Dendritic cell treated with granulocyte-macrophage colony-stimulating factor and Interleukin-4, amounts not matched to agents 40 ng/mL and 50 ng/mL, for 4 days (primary cell): ENCODE measurements at regions of chr19 and their contacts with region 1.

Region 1: DNA sequence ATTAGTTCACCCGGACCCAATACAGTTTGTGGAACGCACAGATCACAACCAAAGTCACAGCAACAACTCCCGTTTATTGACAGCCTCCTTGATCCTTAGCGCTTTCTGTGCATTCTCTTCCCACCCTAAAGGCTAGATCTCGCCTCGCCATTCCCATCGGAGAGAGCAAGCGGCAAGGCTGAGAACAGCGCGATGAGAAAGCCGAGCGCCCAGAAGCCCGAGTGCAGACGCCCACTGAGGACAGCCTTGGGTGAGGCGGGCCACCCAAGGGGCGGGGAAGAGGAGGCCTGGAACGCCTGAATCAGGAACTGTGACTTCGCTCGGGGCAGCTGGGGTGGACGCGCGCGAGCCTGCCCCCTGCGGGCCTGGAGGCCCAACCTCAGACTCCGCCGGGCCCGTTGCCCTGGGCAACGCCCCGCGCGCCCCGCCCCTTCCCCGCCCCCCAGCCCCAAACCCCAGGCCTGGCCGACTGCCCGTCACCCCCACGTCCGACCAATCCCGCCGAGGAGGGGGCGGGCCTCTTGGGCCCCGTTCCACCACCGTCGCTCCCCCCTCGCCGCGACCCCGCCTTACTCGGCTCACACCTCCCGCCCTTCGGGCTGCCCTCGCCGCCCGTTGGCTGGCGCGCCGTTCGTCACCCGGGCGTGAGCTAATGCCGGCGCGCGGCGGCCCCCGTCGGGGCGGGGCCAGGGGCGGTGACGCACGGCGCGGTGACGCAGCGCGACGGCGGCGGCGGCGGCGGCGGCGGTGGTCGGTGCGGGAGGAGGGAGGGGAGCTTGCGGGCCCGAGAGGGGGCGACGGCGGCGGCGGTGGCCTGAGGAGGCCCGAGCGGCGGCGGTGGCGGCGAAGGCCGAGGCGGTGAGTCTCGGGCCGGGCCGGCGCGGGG is at the start of gene SAMD4B:
- H3K4me3 Mint-ChIP-seq: peak within 1 kb of the TSS; percentile 95
- H3K27ac Mint-ChIP-seq: peak within 1 kb of the TSS; percentile 94
- H3K4me1 Mint-ChIP-seq: peaks cover 71% of the 10 kb centered on the region
- H3K27me3 Mint-ChIP-seq: no peaks in the 10 kb centered on the region

Region 2: DNA sequence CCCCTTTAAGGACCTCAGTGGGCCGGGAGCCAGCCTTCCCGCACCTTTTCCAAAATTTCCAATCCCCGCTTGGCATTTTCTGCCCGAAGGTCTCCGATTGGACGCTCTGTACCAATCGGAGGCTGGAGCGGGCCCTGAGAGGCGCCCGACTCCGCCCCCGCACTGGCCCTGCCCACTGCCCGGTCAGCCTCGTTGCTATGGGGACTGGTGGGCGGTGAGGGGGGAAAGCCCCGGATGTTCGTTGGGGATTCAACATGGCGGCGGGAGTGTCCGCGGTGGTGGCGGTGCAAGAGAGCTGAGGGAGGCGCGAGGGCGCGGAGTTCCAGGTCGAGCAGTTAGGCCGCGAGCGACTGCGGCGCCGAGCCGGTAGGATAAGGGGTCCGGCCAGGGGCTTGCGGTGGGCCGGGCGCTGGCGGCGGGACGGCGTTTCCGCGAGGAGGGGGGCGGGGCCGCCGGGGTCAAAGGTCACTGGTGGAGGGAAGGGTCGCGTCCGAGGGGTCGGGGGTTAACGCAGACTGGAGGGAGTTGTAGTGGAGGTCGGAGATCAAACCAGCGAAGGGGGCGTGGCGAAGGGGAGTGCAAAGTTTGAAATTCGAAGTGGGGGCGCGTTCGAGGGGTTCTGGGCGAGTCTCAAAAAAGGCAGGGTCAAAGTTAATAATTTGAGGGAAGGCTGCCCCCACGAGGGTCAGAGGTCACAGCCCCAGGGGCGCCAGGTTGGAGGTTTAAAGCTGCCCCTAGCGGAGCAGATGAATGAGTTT is 216.2 kb before region 1 on chr19 and contains the start of gene PAK4:
- intact Hi-C with region 1: loop called (anchors 5 kb)
- H3K4me3 Mint-ChIP-seq: peak within 1 kb of the TSS; percentile 97
- H3K27ac Mint-ChIP-seq: peak within 1 kb of the TSS; percentile 93
- H3K4me1 Mint-ChIP-seq: peaks cover 42% of the 10 kb centered on the region
- H3K27me3 Mint-ChIP-seq: peaks cover 11% of the 10 kb centered on the region

Region 3: DNA sequence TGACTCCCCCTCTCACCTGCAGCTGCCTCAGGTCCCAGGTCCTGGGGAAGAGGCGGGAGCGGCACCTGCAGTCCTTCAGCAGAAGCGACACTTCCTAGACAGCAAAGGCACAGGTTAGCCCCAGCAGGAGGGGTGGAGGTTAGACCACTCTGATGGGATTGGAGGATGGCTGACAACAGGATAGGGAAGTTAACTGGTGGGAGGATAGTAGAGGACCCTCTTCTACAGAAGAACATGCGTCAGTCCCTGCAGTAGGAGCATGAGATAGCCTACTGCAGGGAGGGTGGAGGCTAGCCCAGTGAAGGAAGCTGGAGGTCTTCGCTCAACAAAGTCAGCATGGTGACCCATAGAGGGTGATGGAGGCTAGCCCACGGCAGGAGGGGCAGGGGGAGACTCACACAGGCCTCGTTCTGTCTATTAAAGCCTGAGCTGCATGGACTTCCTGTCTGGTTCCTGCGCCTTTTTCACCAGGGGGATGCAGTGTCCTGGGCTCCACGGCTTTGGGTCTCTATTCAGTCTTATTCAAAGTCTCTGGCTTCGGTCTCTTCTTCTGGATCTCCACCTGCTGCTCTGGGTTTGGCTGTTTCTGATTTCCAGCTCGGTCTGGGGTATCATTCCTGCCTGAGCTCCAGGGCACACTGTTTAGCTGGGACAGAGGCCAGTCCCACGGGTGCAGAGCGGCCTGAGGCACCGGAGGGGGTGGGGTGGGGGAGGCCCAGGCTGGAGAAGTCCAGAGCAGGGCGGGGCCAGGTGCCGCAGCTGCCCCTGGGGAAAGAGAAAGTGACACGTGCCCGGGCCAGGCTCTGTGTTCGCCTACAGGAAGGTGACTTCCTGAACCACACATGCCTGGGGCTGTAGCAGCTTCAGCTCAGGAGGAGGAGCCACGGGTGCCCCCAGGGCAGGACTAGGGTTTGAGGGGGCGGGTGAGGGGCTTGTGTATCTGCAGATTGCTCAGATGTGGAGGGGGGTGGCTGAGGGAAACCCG is 104.5 kb before region 1 on chr19:
- intact Hi-C with region 1: no loop called
- H3K4me3 Mint-ChIP-seq: no peak overlapping the region
- H3K27ac Mint-ChIP-seq: peak overlapping the region; percentile 28
- H3K4me1 Mint-ChIP-seq: peaks cover 8% of the 10 kb centered on the region
- H3K27me3 Mint-ChIP-seq: peaks cover 35% of the 10 kb centered on the region

Region 4: DNA sequence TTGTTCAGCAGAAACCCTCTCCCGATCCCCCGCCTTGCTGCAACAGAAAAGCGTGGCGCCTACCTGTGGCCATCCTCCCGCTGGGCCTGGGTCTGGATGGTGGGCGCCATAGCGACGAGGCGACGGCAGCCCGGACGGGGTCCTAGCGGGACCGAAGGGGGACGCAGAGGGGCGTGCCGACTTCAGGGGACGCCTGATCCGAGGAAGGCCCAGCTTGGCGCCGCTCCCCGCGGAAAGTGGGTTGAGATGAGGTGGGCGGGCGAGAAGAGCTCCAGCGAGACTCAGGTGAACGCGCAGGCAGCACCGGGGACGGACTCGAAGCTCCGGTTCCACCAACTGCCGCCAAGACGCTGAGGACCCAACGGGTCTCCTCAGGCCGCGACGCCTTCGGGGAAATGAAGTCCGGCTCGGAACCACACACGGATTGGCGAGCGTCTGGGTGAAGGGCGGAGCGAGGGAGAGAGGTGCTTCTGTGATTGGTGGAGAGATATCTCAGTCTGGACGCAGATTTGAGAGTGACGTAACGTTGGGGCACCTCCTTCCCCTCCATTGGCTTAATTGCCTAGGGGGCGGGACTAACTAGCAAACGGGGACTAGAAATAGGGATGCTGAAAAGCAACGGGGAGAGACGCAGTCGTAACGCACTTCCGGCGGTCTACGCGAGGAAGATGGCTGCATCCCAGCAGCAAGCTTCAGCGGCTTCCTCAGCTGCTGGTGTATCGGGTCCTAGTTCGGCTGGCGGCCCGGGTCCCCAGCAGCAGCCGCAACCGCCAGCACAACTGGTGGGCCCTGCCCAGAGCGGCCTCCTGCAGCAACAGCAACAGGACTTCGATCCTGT is 49.0 kb after region 1 on chr19 and contains the starts of genes MED29 and PAF1:
- intact Hi-C with region 1: loop called (anchors 2 kb)
- H3K4me3 Mint-ChIP-seq: peak within 1 kb of the TSS; percentile 99
- H3K27ac Mint-ChIP-seq: peak within 1 kb of the TSS; percentile 98
- H3K4me1 Mint-ChIP-seq: peaks cover 57% of the 10 kb centered on the region
- H3K27me3 Mint-ChIP-seq: no peaks in the 10 kb centered on the region

Region 5: GRCh38 chr19:39412100-39412866 is 70.3 kb after region 1 on chr19 and contains the start of gene PLEKHG2:
- intact Hi-C with region 1: loop called (anchors 5 kb)
- H3K4me3 Mint-ChIP-seq: peak within 1 kb of the TSS; percentile 81
- H3K27ac Mint-ChIP-seq: peak within 1 kb of the TSS; percentile 98
- H3K4me1 Mint-ChIP-seq: peaks cover 44% of the 10 kb centered on the region
- H3K27me3 Mint-ChIP-seq: peaks cover 2% of the 10 kb centered on the region

Region 6: GRCh38 chr19:39435499-39436349 is 93.8 kb after region 1 on chr19 and contains the start of gene RPS16:
- intact Hi-C with region 1: loop called (anchors 5 kb)
- H3K4me3 Mint-ChIP-seq: peak within 1 kb of the TSS; percentile 97
- H3K27ac Mint-ChIP-seq: peak within 1 kb of the TSS; percentile 95
- H3K4me1 Mint-ChIP-seq: peaks cover 48% of the 10 kb centered on the region
- H3K27me3 Mint-ChIP-seq: peaks cover 9% of the 10 kb centered on the region